Tibial artery (tissue), 4 donors: ENCODE measurements at regions of chr1 and their contacts with region 1.

Region 1: DNA sequence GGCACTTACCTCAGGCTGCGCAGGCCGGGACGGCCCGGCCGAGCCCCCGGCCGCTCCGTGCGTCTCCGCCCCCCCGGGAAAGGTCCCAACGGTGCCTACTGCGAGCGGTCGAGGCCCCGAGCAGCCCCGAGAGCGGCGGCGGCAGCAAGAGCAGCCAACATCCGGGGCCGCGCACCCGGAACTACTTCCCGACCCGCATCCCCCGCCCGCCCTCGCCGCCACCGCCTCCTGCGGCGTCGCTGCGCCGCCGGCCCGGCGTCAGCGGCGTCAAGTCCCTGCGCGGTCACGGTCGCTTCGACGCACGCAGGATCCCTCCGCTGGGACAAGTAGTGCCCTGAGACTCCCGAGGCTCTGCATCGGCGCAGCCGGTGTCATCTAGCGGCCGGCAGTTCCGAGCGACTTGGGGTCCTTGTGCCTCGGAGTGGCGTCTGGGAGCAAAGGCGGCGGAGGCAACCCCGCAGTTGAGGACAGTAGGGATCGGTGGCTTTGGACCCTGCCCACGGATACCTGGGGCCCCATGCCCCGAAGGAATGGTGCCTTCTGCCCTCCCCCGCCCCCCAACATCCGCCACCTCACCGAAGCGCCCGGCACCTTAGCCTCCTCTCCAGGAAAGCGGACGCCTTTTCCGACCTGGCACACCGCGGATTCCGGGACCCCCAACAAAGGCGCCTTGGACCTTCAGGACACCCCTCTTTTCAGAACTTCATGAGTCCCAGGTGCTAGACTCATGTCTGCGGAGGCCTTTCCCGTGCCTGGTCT is at the start of gene FOXJ3:
- DNase-seq: peak; percentile 80 to 94
- H3K4me3 ChIP-seq: peak within 1 kb of the TSS; percentile 83 to 98
- H3K27ac ChIP-seq: peak within 1 kb of the TSS; percentile 89 to 90
- H3K4me1 ChIP-seq: peaks cover 0 to 44% (median 11%) of the 10 kb centered on the region in 4 donors
- H3K27me3 ChIP-seq: no peaks in the 10 kb centered on the region
- CTCF ChIP-seq: peak in 1 of 2 experiments; percentile 19

Region 2: GRCh38 chr1:42173155-42173933 is 161.9 kb before region 1 on chr1:
- intact Hi-C with region 1: loop called (anchors 10 kb)
- DNase-seq: no peak
- H3K4me3 ChIP-seq: no peak overlapping the region
- H3K27ac ChIP-seq: no peak overlapping the region
- H3K4me1 ChIP-seq: peaks cover 0 to 18% (median 5%) of the 10 kb centered on the region in 4 donors
- H3K27me3 ChIP-seq: peaks cover 0 to 5% of the 10 kb centered on the region in 2 donors
- CTCF ChIP-seq: peak; percentile 83 to 92

Region 3: GRCh38 chr1:42462828-42463763 is 127.9 kb after region 1 on chr1 and contains the start of gene CCDC30:
- intact Hi-C with region 1: loop called (anchors 10 kb)
- DNase-seq: peak; percentile 97 to 99
- H3K4me3 ChIP-seq: peak within 1 kb of the TSS; percentile 62 to 69
- H3K27ac ChIP-seq: peak within 1 kb of the TSS; percentile 39 to 52
- H3K4me1 ChIP-seq: peaks cover 0 to 27% (median 9%) of the 10 kb centered on the region in 4 donors
- H3K27me3 ChIP-seq: no peaks in the 10 kb centered on the region
- CTCF ChIP-seq: peak in 1 of 2 experiments; percentile 24

Region 4: DNA sequence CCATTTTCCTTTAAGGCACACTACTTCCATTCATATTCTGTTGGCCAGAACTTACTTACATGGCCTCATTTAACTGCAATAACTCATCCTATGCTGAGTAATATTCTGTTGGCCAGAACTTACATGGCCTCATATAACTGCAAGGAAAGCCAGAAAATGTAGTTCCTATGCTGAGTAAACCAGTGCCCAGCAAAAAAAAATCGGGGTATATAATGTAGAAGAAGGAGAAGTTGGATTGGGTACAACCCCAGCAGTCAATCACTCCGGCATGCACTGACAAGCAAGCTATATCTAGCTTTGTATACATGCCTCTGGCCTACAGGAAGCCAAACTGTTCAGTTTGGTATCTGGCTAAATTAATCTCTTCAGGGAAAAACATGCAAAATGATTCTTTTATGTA is 283.6 kb after region 1 on chr1:
- intact Hi-C with region 1: no loop called
- DNase-seq: no peak
- H3K4me3 ChIP-seq: no peak overlapping the region
- H3K27ac ChIP-seq: no peak overlapping the region
- H3K4me1 ChIP-seq: no peaks in the 10 kb centered on the region
- H3K27me3 ChIP-seq: no peaks in the 10 kb centered on the region
- CTCF ChIP-seq: no peak